ENCODE measurements at regions of chr6 and their contacts with region 1.

Region 1: DNA sequence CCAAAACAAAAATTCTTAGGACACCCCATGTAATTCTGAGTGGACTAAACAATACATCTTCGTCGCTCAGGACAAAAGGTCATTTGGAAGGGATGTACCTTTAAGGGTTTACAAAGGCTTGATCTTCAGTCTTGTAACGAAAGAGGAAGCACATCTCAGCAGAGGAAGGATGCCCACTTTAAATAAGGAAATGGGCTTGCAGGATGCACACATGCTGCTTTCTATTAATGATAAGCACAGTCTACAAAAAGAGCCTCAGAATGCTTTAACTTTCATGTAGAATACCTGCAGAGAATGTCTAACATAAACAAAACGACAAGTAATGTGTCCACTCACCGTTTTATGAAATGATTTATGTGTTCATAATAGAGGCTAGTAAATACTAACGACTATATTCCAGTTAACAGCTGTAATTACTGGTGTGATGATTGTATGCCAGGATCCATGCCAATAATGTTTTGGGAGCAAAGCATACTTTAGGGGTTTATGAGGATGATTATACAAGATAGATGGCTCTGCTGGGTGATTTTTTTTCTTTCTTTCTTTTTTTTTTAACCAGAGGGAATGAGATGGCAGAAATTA is 216.9 kb downstream of the GMDS start:
- DNase-seq: peak in 1 of 35 experiments; percentile 4
- ATAC-seq: no peak
- H3K4me3 ChIP-seq: no peak overlapping the region
- H3K4me3 Mint-ChIP-seq: no peak overlapping the region
- H3K27ac ChIP-seq: no peak overlapping the region
- H3K27ac Mint-ChIP-seq: no peak overlapping the region
- H3K4me1 ChIP-seq: peaks cover 0 to 9% of the 10 kb centered on the region in 2 experiments
- H3K4me1 Mint-ChIP-seq: peaks cover 24 to 28% (median 26%) of the 10 kb centered on the region in 3 donors
- H3K27me3 ChIP-seq: no peaks in the 10 kb centered on the region
- H3K27me3 Mint-ChIP-seq: no peaks in the 10 kb centered on the region

Region 2: GRCh38 chr6:1821513-1822183 is 206.9 kb before region 1 on chr6:
- CTCF ChIA-PET with region 1: interaction called in 1 of 2 experiments, 10 read pairs
- POLR2A ChIA-PET with region 1: no interaction called
- DNase-seq: no peak
- ATAC-seq: no peak
- H3K4me3 ChIP-seq: no peak overlapping the region
- H3K4me3 Mint-ChIP-seq: no peak overlapping the region
- H3K27ac ChIP-seq: no peak overlapping the region
- H3K27ac Mint-ChIP-seq: no peak overlapping the region
- H3K4me1 ChIP-seq: no peaks in the 10 kb centered on the region
- H3K4me1 Mint-ChIP-seq: peaks cover 0 to 2% (median 0%) of the 10 kb centered on the region in 3 donors
- H3K27me3 ChIP-seq: no peaks in the 10 kb centered on the region
- H3K27me3 Mint-ChIP-seq: no peaks in the 10 kb centered on the region

Region 3: DNA sequence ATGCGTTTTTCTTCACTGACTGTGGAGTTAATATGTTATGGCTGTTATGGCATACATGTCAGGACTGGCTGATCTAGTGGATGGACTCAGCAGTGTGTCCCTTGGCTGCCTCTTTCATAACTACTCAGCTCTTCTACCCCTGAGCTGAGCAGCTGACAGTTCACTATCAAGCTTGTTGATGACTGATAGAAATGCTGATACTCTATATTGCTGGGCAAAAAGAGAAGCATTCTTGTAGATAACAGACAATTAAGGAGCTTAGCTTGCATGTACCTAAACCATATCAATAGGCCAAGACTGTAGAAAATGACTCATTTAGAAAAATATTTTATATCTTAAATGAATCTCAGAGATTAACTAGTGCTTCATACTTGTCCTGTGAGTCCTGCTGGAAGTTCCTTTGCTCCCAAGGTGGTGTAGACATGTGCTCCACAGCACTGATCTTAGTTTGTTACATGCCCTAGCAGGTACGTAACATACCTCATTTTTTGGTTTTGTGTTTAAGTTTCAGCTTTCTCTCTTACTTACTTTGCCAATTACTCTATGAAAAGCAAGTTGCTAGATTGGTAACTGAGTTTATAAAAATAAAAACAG is 20.1 kb before region 1 on chr6:
- CTCF ChIA-PET with region 1: no interaction called
- POLR2A ChIA-PET with region 1: no interaction called
- DNase-seq: no peak
- ATAC-seq: no peak
- H3K4me3 ChIP-seq: no peak overlapping the region
- H3K4me3 Mint-ChIP-seq: no peak overlapping the region
- H3K27ac ChIP-seq: no peak overlapping the region
- H3K27ac Mint-ChIP-seq: no peak overlapping the region
- H3K4me1 ChIP-seq: no peaks in the 10 kb centered on the region
- H3K4me1 Mint-ChIP-seq: no peaks in the 10 kb centered on the region
- H3K27me3 ChIP-seq: no peaks in the 10 kb centered on the region
- H3K27me3 Mint-ChIP-seq: no peaks in the 10 kb centered on the region

Region 4: DNA sequence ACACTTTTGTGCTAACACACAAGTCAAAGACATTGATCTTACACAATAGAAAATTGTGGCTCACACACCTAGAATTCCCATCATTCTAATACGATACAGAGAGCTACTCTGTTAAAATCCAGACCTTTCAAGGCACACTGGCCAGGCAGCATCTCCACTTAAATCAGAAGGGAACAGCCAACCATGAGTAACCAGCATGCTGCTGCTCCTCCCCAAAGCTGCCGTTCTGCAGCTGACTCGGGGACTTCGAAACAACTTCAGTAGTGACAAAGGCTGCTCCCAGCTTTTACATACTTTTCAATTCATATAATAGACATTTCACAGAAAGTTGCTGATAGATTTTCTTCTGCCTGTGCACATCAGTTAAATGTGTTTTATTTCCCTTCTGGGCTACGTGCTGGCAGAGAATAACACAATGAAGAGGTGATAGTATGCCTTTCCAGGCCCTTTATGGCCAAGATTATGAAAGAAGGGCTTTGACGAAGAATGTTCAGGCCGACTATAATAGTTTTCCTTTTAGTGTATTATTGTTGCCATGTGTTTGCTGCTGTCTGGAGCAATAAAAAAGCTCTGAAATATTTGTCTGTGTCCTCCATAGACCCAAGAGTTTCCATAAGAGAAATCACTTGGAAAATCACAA is 57.9 kb after region 1 on chr6:
- CTCF ChIA-PET with region 1: no interaction called
- POLR2A ChIA-PET with region 1: no interaction called
- DNase-seq: no peak
- ATAC-seq: no peak
- H3K4me3 ChIP-seq: no peak overlapping the region
- H3K4me3 Mint-ChIP-seq: no peak overlapping the region
- H3K27ac ChIP-seq: no peak overlapping the region
- H3K27ac Mint-ChIP-seq: no peak overlapping the region
- H3K4me1 ChIP-seq: peaks cover 4 to 6% of the 10 kb centered on the region in 2 experiments
- H3K4me1 Mint-ChIP-seq: peaks cover 15 to 20% (median 17%) of the 10 kb centered on the region in 3 donors
- H3K27me3 ChIP-seq: no peaks in the 10 kb centered on the region
- H3K27me3 Mint-ChIP-seq: no peaks in the 10 kb centered on the region